ENCODE measurements at regions of chr13 and their contacts with region 1.

Region 1: GRCh38 chr13:60431108-60431700 is 34.2 kb downstream of the TDRD3 start:
- DNase-seq: peak; percentile 69
- ATAC-seq: peak; percentile 75
- H3K4me3 ChIP-seq: no peak overlapping the region
- H3K4me3 Mint-ChIP-seq: no peak overlapping the region
- H3K27ac ChIP-seq: no peak overlapping the region
- H3K27ac Mint-ChIP-seq: no peak overlapping the region
- H3K4me1 ChIP-seq: peaks cover 4% of the 10 kb centered on the region in 2 donors
- H3K4me1 Mint-ChIP-seq: peaks cover 19% of the 10 kb centered on the region
- H3K27me3 ChIP-seq: no peaks in the 10 kb centered on the region
- H3K27me3 Mint-ChIP-seq: no peaks in the 10 kb centered on the region
- CTCF ChIP-seq: peak; percentile 98

Region 2: DNA sequence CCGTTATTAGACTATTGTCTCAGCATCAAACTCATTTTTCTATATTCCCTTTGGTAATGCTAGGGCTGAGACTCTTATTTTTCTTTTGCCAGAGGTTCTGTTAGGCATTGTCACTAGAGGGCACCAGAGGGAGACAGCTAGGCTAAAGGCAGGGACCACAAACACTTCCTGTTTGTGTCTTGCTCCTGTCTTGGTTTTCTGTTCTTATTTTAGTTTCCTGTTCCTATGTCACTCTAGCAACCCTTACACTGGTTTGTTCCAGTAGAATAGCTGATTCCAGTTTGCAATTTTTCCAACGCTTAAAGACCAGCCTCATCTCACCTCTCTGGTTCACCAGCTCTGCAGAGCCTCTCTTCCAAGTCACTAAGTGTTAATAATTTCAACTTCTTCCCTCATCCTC is 1039.5 kb before region 1 on chr13:
- CTCF ChIA-PET with region 1: interaction called, 31 read pairs
- POLR2A ChIA-PET with region 1: no interaction called
- intact Hi-C with region 1: no loop called
- DNase-seq: peak; percentile 64
- ATAC-seq: peak; percentile 67
- H3K4me3 ChIP-seq: no peak overlapping the region
- H3K4me3 Mint-ChIP-seq: no peak overlapping the region
- H3K27ac ChIP-seq: no peak overlapping the region
- H3K27ac Mint-ChIP-seq: no peak overlapping the region
- H3K4me1 ChIP-seq: peaks cover 11% of the 10 kb centered on the region in 2 donors
- H3K4me1 Mint-ChIP-seq: no peaks in the 10 kb centered on the region
- H3K27me3 ChIP-seq: no peaks in the 10 kb centered on the region
- H3K27me3 Mint-ChIP-seq: peaks cover 4% of the 10 kb centered on the region
- CTCF ChIP-seq: peak; percentile 71

Region 3: DNA sequence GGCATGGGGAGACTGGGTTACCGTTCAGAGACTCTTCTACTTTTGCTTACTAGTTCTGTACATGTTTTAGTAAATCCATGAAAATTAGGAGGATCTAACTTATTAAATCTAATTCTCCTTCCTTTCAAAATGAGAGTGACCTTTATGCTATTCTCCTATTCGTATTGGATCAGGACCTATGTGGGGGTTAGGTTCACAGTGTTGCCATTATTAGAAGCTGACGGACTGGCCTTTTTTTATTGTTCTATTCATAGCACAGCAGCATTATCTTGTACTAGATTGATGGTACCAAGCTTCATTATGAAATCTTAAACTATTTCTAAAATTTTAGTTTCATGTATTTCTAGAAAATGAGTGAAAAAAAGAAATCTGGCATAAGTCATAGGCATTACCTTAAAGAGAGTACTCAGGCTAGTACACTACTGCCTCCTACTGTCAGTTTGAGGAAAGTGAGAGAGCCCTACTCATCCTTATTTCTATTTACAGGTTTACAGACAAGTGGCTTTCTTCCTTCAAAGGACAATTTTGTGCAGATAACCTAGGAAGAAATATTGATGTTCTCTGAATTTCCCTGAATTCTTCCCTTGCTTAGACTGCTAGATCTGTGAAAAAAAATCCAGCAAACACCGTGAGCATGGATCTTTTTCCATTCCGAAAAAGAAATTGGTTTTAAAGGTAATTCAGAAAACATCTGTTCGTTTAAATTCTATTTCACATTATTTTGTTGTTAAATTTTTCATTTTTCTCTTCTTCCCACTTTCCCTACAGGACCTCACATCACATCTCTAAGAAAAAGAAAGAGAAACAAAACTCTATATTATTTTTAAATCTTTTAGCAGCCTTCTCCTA is 753.0 kb before region 1 on chr13:
- CTCF ChIA-PET with region 1: interaction called, 43 read pairs
- POLR2A ChIA-PET with region 1: no interaction called
- intact Hi-C with region 1: loop called (anchors 1 kb)
- DNase-seq: peak; percentile 5
- ATAC-seq: no peak
- H3K4me3 ChIP-seq: no peak overlapping the region
- H3K4me3 Mint-ChIP-seq: no peak overlapping the region
- H3K27ac ChIP-seq: no peak overlapping the region
- H3K27ac Mint-ChIP-seq: no peak overlapping the region
- H3K4me1 ChIP-seq: no peaks in the 10 kb centered on the region
- H3K4me1 Mint-ChIP-seq: peaks cover under 1% of the 10 kb centered on the region
- H3K27me3 ChIP-seq: no peaks in the 10 kb centered on the region
- H3K27me3 Mint-ChIP-seq: no peaks in the 10 kb centered on the region
- CTCF ChIP-seq: peak; percentile 50

Region 4: GRCh38 chr13:60335531-60335930 is 95.7 kb before region 1 on chr13:
- CTCF ChIA-PET with region 1: interaction called, 5 read pairs
- POLR2A ChIA-PET with region 1: no interaction called
- intact Hi-C with region 1: loop called (anchors 1 kb)
- DNase-seq: no peak
- ATAC-seq: no peak
- H3K4me3 ChIP-seq: no peak overlapping the region
- H3K4me3 Mint-ChIP-seq: no peak overlapping the region
- H3K27ac ChIP-seq: no peak overlapping the region
- H3K27ac Mint-ChIP-seq: no peak overlapping the region
- H3K4me1 ChIP-seq: no peaks in the 10 kb centered on the region
- H3K4me1 Mint-ChIP-seq: no peaks in the 10 kb centered on the region
- H3K27me3 ChIP-seq: peaks cover 0 to 8% (median 3%) of the 10 kb centered on the region in 4 experiments
- H3K27me3 Mint-ChIP-seq: peaks cover 22% of the 10 kb centered on the region
- CTCF ChIP-seq: peak; percentile 72

Region 5: DNA sequence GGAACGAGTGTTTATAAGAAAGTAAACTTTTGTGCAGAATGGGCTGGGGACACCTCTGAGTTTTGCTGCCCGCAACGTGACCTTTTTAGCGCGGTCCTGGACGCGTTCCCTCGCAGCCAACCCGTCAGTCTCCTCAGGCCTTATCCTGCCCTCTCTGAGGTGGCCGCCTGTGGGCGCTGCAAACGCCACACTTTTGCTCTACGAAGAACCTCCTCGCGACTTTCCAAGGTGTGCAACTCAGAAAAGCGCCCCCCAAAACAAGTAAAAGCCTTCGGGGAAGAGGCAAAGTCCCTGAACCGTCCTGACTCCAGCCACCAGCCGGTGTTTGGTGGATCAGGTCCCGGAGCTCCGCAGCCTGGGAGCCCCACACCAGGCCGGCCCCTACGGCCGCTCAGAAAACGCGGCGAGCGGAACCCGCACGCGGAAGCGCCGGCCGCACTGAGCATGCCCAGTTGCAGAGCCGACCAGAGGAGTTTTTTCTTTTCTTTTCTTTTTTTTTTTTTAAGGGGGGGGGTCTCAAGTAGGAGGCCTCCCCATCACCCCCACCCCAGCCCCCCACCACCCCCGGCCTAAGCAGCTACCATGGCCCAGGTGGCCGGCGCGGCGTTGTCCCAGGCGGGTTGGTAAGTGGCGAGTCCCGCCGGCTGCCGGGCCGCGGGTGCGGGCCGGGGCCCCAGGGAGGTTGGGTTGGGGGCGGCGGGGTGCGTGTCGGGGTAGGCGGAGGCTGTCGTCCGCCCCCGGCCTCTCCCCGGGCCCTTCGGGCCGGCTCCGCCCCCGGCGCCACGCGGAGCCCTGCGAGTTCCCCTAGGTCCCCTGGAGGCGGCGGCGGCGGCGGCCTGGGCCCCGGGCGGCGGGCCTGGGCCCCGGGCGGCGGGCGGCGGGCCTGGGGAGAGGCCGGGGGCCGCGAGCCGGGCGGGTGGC is 34.2 kb before region 1 on chr13 and contains the start of gene TDRD3:
- CTCF ChIA-PET with region 1: interaction called, 6 read pairs
- POLR2A ChIA-PET with region 1: no interaction called
- intact Hi-C with region 1: loop called (anchors 2 kb)
- DNase-seq: peak; percentile 91
- ATAC-seq: peak; percentile 70
- H3K4me3 ChIP-seq: peak within 1 kb of the TSS; percentile 71 to 93 (median 79)
- H3K4me3 Mint-ChIP-seq: peak within 1 kb of the TSS; percentile 97
- H3K27ac ChIP-seq: peak within 1 kb of the TSS; percentile 86 to 93
- H3K27ac Mint-ChIP-seq: peak within 1 kb of the TSS; percentile 99
- H3K4me1 ChIP-seq: peaks cover 15 to 19% of the 10 kb centered on the region in 2 donors
- H3K4me1 Mint-ChIP-seq: peaks cover 38% of the 10 kb centered on the region
- H3K27me3 ChIP-seq: no peaks in the 10 kb centered on the region
- H3K27me3 Mint-ChIP-seq: no peaks in the 10 kb centered on the region
- CTCF ChIP-seq: peak; percentile 83
- total RNA-seq, gene TDRD3: 23.7 and 27.3 TPM in 2 replicates

Region 6: GRCh38 chr13:60448907-60449510 is 17.8 kb after region 1 on chr13:
- CTCF ChIA-PET with region 1: interaction called, 11 read pairs
- POLR2A ChIA-PET with region 1: no interaction called
- intact Hi-C with region 1: no loop called
- DNase-seq: peak; percentile 22
- ATAC-seq: no peak
- H3K4me3 ChIP-seq: no peak overlapping the region
- H3K4me3 Mint-ChIP-seq: no peak overlapping the region
- H3K27ac ChIP-seq: no peak overlapping the region
- H3K27ac Mint-ChIP-seq: no peak overlapping the region
- H3K4me1 ChIP-seq: no peaks in the 10 kb centered on the region
- H3K4me1 Mint-ChIP-seq: no peaks in the 10 kb centered on the region
- H3K27me3 ChIP-seq: no peaks in the 10 kb centered on the region
- H3K27me3 Mint-ChIP-seq: no peaks in the 10 kb centered on the region
- CTCF ChIP-seq: peak; percentile 75